ENCODE measurements at regions of chr4 and their contacts with region 1.

Region 1: GRCh38 chr4:76179398-76180318 is 31.5 kb upstream of the NUP54 start:
- DNase-seq: peak; percentile 83
- ATAC-seq: peak; percentile 84
- H3K4me3 ChIP-seq: no peak overlapping the region
- H3K4me3 Mint-ChIP-seq: no peak overlapping the region
- H3K27ac ChIP-seq: no peak overlapping the region
- H3K27ac Mint-ChIP-seq: no peak overlapping the region
- H3K4me1 ChIP-seq: no peaks in the 10 kb centered on the region
- H3K4me1 Mint-ChIP-seq: peaks cover 4% of the 10 kb centered on the region
- H3K27me3 ChIP-seq: no peaks in the 10 kb centered on the region
- H3K27me3 Mint-ChIP-seq: no peaks in the 10 kb centered on the region
- CTCF ChIP-seq: peak; percentile 95

Region 2: GRCh38 chr4:76160355-76160754 is 19.3 kb before region 1 on chr4:
- CTCF ChIA-PET with region 1: interaction called, 11 read pairs
- POLR2A ChIA-PET with region 1: no interaction called
- intact Hi-C with region 1: no loop called
- DNase-seq: no peak
- ATAC-seq: no peak
- H3K4me3 ChIP-seq: no peak overlapping the region
- H3K4me3 Mint-ChIP-seq: no peak overlapping the region
- H3K27ac ChIP-seq: no peak overlapping the region
- H3K27ac Mint-ChIP-seq: no peak overlapping the region
- H3K4me1 ChIP-seq: no peaks in the 10 kb centered on the region
- H3K4me1 Mint-ChIP-seq: no peaks in the 10 kb centered on the region
- H3K27me3 ChIP-seq: no peaks in the 10 kb centered on the region
- H3K27me3 Mint-ChIP-seq: no peaks in the 10 kb centered on the region
- CTCF ChIP-seq: no peak

Region 3: DNA sequence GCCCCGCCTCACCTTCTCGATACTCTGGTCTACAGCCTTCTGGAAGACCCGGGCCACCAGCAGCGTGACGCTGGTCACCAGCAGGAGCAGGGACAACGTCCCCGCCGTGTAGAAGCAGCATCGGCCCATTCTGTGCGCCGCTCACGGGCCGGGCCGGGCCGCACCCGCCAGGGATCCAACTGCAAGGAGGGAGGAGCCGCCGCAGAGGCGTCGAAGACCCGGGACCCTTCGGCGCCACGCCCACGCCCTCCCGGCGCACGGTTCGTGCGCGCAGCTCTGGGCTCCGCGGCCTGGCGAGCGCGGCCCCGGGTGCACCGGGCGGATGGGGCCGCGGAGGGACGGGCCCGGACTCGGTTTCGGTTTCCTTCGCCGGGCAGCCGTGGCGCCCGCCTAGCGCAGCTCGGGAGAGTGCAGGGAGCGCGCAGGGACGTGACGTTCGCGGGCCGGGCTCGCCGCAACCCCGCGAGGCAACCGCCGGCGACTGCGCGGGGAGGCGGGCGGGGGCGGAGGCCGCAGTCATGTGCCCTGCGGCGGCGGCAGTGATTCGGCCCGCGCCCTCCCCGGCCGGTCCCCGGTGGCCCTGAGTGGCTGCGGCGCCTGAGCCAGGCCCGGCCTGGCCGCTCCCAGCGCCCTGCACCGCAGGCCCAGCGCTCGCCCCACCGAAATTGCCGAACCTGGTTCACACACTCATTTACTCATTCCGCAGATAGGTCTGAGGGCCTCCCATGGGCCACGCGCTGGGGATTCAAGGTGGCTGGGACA is 33.9 kb after region 1 on chr4 and contains the start of gene SCARB2:
- CTCF ChIA-PET with region 1: interaction called, 26 read pairs
- POLR2A ChIA-PET with region 1: no interaction called
- intact Hi-C with region 1: no loop called
- DNase-seq: peak; percentile 91
- ATAC-seq: peak; percentile 79
- H3K4me3 ChIP-seq: peak within 1 kb of the TSS; percentile 54 to 87 (median 71)
- H3K4me3 Mint-ChIP-seq: peak within 1 kb of the TSS; percentile 89
- H3K27ac ChIP-seq: peak within 1 kb of the TSS; percentile 85 to 86
- H3K27ac Mint-ChIP-seq: peak within 1 kb of the TSS; percentile 96
- H3K4me1 ChIP-seq: peaks cover 47 to 49% of the 10 kb centered on the region in 2 donors
- H3K4me1 Mint-ChIP-seq: peaks cover 47% of the 10 kb centered on the region
- H3K27me3 ChIP-seq: no peaks in the 10 kb centered on the region
- H3K27me3 Mint-ChIP-seq: no peaks in the 10 kb centered on the region
- CTCF ChIP-seq: no peak
- total RNA-seq, gene SCARB2: 30.3 and 31.5 TPM in 2 replicates

Region 4: DNA sequence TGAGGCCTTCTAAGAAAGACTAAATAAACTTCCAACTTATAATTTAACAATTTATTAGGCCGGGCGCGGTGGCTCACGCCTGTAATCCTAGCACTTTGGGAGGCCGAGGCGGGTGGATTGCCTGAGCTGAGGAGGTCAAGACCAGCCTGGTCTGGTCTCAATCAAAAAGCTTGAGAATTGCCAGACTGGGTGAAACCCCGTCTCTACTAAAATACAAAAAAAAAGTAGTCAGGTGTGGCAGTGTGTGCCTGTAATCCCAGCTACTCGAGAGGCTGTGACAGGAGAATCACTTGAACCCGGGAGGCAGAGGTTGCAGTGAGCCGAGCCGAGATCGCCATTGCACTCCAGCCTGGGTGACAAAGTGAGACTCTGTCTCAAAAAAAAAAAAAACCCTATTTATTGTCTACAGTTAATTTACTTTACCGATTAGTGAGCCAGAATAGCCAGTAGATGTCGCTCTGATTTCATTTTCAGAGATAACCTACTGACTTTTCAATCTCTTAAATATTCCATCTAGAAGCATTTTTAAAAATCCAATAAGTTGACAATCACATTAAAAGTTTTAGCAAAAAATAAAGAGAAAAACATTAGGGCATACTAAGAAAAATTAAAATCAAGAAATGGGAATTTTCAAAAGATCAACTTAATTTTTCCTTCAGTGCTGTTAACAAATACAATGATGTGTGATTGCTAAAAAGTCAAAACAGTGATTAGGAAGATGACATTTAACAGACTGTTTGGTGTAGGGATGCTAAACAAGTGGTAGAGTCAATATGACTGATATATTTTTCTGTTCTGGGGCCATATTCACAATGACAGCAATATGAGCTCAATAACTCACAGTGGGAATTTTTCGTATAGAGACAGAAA is 251.1 kb after region 1 on chr4:
- CTCF ChIA-PET with region 1: interaction called, 10 read pairs
- POLR2A ChIA-PET with region 1: no interaction called
- intact Hi-C with region 1: no loop called
- DNase-seq: peak; percentile 65
- ATAC-seq: no peak
- H3K4me3 ChIP-seq: no peak overlapping the region
- H3K4me3 Mint-ChIP-seq: no peak overlapping the region
- H3K27ac ChIP-seq: no peak overlapping the region
- H3K27ac Mint-ChIP-seq: no peak overlapping the region
- H3K4me1 ChIP-seq: peaks cover 7 to 15% of the 10 kb centered on the region in 2 donors
- H3K4me1 Mint-ChIP-seq: peaks cover 19% of the 10 kb centered on the region
- H3K27me3 ChIP-seq: no peaks in the 10 kb centered on the region
- H3K27me3 Mint-ChIP-seq: peaks cover 16% of the 10 kb centered on the region
- CTCF ChIP-seq: peak; percentile 89

Region 5: GRCh38 chr4:76504613-76505465 is 325.2 kb after region 1 on chr4:
- CTCF ChIA-PET with region 1: interaction called, 78 read pairs
- POLR2A ChIA-PET with region 1: no interaction called
- intact Hi-C with region 1: no loop called
- DNase-seq: peak; percentile 64
- ATAC-seq: no peak
- H3K4me3 ChIP-seq: no peak overlapping the region
- H3K4me3 Mint-ChIP-seq: no peak overlapping the region
- H3K27ac ChIP-seq: no peak overlapping the region
- H3K27ac Mint-ChIP-seq: no peak overlapping the region
- H3K4me1 ChIP-seq: peaks cover 5 to 6% of the 10 kb centered on the region in 2 donors
- H3K4me1 Mint-ChIP-seq: peaks cover 9% of the 10 kb centered on the region
- H3K27me3 ChIP-seq: no peaks in the 10 kb centered on the region
- H3K27me3 Mint-ChIP-seq: peaks cover 3% of the 10 kb centered on the region
- CTCF ChIP-seq: peak; percentile 76

Region 6: GRCh38 chr4:77308843-77309242 is 1129.2 kb after region 1 on chr4:
- CTCF ChIA-PET with region 1: no interaction called
- POLR2A ChIA-PET with region 1: no interaction called
- intact Hi-C with region 1: loop called (anchors 5 kb)
- DNase-seq: peak; percentile 16
- ATAC-seq: no peak
- H3K4me3 ChIP-seq: no peak overlapping the region
- H3K4me3 Mint-ChIP-seq: no peak overlapping the region
- H3K27ac ChIP-seq: no peak overlapping the region
- H3K27ac Mint-ChIP-seq: no peak overlapping the region
- H3K4me1 ChIP-seq: no peaks in the 10 kb centered on the region
- H3K4me1 Mint-ChIP-seq: no peaks in the 10 kb centered on the region
- H3K27me3 ChIP-seq: no peaks in the 10 kb centered on the region
- H3K27me3 Mint-ChIP-seq: peaks cover 3% of the 10 kb centered on the region
- CTCF ChIP-seq: peak; percentile 29

Measured in B cell (primary cell).